Right cardiac atrium (tissue), 5 donors: ENCODE measurements at regions of chr3 and their contacts with region 1.

Region 1: GRCh38 chr3:178325330-178325729 is 210.9 kb upstream of the KCNMB2 start:
- DNase-seq: no peak
- ATAC-seq: no peak
- H3K4me3 ChIP-seq: no peak overlapping the region
- H3K27ac ChIP-seq: no peak overlapping the region
- H3K4me1 ChIP-seq: peaks cover 2% of the 10 kb centered on the region
- H3K27me3 ChIP-seq: no peaks in the 10 kb centered on the region

Region 2: GRCh38 chr3:177037241-177037640 is 1288.1 kb before region 1 on chr3:
- intact Hi-C with region 1: loop called in 1 of 4 experiments (anchors 10 kb)
- DNase-seq: no peak
- ATAC-seq: peak in 1 of 2 donors; percentile 49
- H3K4me3 ChIP-seq: no peak overlapping the region
- H3K27ac ChIP-seq: no peak overlapping the region
- H3K4me1 ChIP-seq: peaks cover 7% of the 10 kb centered on the region
- H3K27me3 ChIP-seq: no peaks in the 10 kb centered on the region

Region 3: GRCh38 chr3:178048768-178049167 is 276.6 kb before region 1 on chr3:
- intact Hi-C with region 1: no loop called
- DNase-seq: no peak
- ATAC-seq: no peak
- H3K4me3 ChIP-seq: no peak overlapping the region
- H3K27ac ChIP-seq: no peak overlapping the region
- H3K4me1 ChIP-seq: no peaks in the 10 kb centered on the region
- H3K27me3 ChIP-seq: no peaks in the 10 kb centered on the region

Region 4: DNA sequence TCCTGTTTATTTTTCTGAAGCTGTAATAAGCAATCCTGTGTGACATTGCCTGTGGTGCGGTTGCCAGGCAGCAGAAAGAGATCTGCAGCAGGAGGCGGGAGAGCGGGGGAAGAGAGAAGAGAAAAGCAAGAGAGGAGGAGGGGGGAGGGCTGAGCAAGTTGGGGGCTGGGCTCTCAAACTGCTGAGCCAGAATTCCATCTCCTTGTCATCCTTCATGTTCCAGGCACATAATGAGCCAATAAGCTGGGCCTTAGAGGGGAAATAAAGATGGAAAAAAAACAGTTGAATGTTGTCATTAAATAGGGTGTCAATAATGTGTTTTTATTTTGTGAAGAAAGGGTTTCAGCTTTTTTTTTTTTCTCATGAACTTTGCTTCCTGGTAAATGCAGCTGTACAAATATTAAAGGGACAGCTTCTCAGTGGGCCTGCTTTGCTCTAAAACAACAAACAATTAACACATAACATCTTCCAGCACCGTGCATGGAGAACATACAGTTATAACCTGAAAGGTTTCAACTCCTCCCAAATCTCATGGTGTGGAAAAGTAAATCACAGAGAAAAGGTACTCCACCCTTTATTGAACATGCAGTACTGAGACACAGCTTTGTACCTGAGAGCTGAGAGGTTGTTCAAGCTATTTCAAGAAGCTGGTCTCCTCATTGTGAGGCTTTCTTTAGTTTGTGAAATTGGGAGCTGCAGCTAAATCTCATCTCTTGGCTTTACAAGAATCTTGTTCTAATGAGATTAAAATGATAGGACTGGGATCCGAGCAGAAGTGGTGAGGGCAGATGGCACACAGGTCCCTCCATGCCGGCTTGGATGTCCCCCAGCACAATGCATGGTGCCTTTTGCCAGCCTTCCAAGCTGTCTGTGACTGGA is 240.2 kb before region 1 on chr3:
- intact Hi-C with region 1: loop called in 1 of 4 experiments (anchors 10 kb)
- DNase-seq: peak; percentile 75 to 91 (median 89)
- ATAC-seq: peak; percentile 93 to 95
- H3K4me3 ChIP-seq: no peak overlapping the region
- H3K27ac ChIP-seq: peak overlapping the region; percentile 67
- H3K4me1 ChIP-seq: peaks cover 8% of the 10 kb centered on the region
- H3K27me3 ChIP-seq: no peaks in the 10 kb centered on the region